ENCODE measurements at regions of chr2 and their contacts with region 1.

Region 1: GRCh38 chr2:44981136-44982108 is 27.8 kb downstream of the SIX2 start:
- DNase-seq: peak; percentile 47
- H3K4me3 Mint-ChIP-seq: no peak overlapping the region
- H3K27ac Mint-ChIP-seq: no peak overlapping the region
- H3K4me1 Mint-ChIP-seq: peaks cover 2% of the 10 kb centered on the region
- H3K27me3 Mint-ChIP-seq: peaks cover 17% of the 10 kb centered on the region

Region 2: DNA sequence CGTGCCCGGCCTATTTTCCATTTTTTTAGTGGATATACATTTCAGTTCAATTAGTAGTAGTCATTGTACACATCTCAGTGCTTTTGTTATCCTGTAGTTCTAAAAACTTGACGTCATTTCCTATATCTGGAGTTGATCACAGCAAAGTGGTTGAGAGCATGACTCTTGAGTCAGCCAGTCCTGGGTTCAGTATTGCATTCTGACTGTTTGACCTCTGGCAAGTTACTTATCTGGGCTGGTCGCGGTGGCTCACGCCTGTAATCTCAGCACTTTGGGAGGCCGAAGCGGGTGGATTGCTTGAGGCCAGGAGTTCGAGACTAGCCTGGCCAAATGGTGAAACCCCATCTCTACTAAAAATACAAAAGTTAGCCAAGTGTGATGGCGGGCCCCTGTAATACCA is 863.2 kb before region 1 on chr2:
- intact Hi-C with region 1: no loop called
- DNase-seq: peak; percentile 32
- H3K4me3 Mint-ChIP-seq: no peak overlapping the region
- H3K27ac Mint-ChIP-seq: peak overlapping the region; percentile 62
- H3K4me1 Mint-ChIP-seq: peaks cover 32% of the 10 kb centered on the region
- H3K27me3 Mint-ChIP-seq: no peaks in the 10 kb centered on the region

Region 3: DNA sequence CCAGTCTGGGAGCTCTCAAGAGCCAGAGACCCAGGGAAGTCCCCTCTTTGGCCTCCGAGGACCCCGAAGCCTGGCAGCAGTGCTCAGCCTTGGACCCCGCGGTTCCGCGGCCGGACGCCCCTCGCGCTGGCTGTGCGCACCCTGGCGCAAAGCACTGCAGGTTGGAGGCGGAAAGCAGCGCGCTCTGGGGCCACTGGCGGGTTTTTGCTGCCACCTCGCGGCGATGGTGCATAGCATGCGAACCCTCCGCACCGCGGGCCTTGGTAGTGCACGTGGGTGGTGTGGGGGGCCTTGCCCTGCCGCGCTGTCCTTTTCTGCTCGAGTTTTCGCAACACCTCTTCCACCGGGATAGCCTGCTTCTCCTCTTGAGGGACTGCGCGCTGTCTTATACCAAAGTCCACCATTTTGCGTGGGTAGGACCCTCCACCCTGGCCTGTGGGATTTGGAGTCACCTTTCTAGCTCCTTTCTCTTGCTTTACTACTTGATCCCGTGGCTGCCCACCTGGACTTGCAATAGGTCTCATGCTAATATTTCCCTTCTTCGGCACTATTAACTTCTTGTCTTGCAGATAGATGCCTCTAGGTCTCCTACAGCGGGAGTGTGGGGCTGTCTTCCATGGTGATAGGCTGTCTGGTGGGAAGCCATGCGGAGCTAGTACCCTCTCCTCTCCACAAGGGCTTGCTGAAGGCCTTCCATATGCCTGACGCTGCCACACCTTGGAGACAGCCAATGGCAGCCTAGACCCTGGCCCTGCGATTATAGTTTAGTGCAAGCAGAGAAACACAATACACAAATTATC is 25.6 kb before region 1 on chr2:
- intact Hi-C with region 1: no loop called
- DNase-seq: peak; percentile 70
- H3K4me3 Mint-ChIP-seq: no peak overlapping the region
- H3K27ac Mint-ChIP-seq: no peak overlapping the region
- H3K4me1 Mint-ChIP-seq: peaks cover 14% of the 10 kb centered on the region
- H3K27me3 Mint-ChIP-seq: peaks cover 62% of the 10 kb centered on the region

Region 4: GRCh38 chr2:45578056-45578809 is 596.8 kb after region 1 on chr2:
- intact Hi-C with region 1: loop called (anchors 2 kb)
- DNase-seq: no peak
- H3K4me3 Mint-ChIP-seq: no peak overlapping the region
- H3K27ac Mint-ChIP-seq: no peak overlapping the region
- H3K4me1 Mint-ChIP-seq: peaks cover 10% of the 10 kb centered on the region
- H3K27me3 Mint-ChIP-seq: no peaks in the 10 kb centered on the region